Activated CD4-positive, alpha-beta T cell treated with anti-CD3 and anti-CD28 coated beads for 36 hours (primary cell): ENCODE measurements at regions of chr17 and their contacts with region 1.

Region 1: GRCh38 chr17:59762513-59763374 is 55.3 kb downstream of the VMP1 start:
- DNase-seq: no peak
- ATAC-seq: peak; percentile 66
- H3K4me3 Mint-ChIP-seq: peak overlapping the region; percentile 63
- H3K27ac Mint-ChIP-seq: peak overlapping the region; percentile 98
- H3K4me1 Mint-ChIP-seq: peaks cover 68% of the 10 kb centered on the region
- H3K27me3 Mint-ChIP-seq: no peaks in the 10 kb centered on the region

Region 2: DNA sequence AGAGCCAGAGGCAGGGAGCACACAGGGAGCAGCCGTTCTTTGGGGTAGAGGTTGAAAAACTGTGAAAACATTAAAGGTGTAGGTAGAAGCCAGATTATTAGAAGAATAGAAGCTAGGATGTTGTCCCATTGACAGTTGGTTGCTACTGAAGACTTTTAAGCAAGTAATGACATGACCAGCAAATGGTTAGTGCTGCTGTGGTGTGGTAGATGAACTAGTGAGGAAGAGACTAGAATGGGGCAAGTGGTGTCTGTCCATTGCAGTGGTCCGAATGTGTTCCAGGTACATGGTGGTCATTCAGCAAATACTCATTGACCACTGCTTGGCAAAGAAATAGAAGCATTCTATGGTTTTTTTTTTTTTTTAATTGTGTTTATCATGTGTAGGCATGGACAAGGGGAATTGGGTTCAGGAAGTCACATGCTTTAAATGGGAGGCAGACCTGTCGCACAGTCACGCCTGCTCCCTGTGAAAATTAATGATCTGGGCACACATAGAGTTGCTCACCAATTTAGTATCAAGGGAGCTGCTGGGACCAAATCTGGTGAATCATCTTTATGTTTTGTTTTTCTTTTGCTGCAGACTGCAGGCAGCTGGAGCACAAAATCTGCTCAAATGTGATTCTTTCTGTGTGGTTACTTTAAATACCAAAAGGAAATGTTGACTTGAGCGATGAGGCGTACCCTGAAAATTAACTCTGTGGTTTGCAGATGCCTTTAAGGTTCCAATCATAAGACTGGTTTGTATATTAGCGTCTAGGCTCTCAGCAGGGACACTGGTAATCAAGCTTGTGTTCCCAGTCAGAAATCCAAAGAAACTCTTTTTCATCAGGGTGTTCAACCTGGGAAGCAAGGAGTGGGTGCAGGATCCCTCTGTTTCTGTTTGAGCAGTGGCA is 400.6 kb before region 1 on chr17:
- CTCF ChIA-PET with region 1: no interaction called
- POLR2A ChIA-PET with region 1: no interaction called
- intact Hi-C with region 1: loop called in 1 of 2 experiments (anchors 5 kb)
- DNase-seq: peak; percentile 55
- ATAC-seq: peak; percentile 73
- H3K4me3 Mint-ChIP-seq: peak overlapping the region; percentile 60
- H3K27ac Mint-ChIP-seq: peak overlapping the region; percentile 96
- H3K4me1 Mint-ChIP-seq: peaks cover 78% of the 10 kb centered on the region
- H3K27me3 Mint-ChIP-seq: no peaks in the 10 kb centered on the region

Region 3: DNA sequence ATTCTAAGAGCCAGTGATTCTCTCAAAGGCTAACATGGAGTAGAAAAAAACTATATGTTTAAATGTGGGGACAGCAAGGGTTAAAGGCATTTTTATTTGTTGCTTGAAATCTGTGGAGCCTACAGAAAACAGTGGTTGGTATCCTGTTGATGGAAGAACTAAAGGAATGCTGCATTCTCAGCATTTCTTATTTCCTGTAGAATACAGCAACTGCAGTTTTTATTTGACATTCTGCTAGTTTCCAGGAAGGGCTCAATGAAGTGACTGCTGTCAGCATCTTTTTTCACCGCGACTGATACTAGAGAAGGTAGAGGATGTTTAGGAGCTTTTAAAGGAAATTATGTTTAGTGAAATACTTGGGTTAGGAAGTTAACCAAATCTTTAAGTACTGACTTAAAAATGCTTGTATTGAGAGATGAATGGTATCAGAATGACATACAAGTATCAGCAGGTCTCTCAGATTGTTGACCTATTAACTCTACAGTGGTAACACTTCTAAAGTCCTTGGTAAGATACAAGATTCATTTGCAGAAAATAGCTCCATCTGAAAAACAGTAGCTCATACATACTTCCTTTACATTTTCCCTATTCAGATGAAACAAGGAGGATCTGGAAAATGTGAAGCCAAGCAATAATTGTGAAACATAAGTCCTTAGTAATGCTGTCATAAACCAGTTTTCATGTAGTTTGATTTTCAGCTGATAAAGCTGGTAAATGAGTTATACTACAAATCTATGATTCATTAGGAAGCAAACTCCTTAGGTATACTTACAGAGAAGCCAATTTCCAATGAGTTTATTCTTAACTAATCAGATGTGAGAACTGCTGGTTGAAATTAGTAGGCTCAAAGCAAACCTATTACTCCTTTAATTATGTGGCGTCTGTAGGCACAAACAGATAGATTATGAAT is 127.9 kb before region 1 on chr17:
- CTCF ChIA-PET with region 1: no interaction called
- POLR2A ChIA-PET with region 1: no interaction called
- intact Hi-C with region 1: no loop called
- DNase-seq: no peak
- ATAC-seq: peak; percentile 50
- H3K4me3 Mint-ChIP-seq: no peak overlapping the region
- H3K27ac Mint-ChIP-seq: peak overlapping the region; percentile 63
- H3K4me1 Mint-ChIP-seq: peaks cover 72% of the 10 kb centered on the region
- H3K27me3 Mint-ChIP-seq: no peaks in the 10 kb centered on the region

Region 4: DNA sequence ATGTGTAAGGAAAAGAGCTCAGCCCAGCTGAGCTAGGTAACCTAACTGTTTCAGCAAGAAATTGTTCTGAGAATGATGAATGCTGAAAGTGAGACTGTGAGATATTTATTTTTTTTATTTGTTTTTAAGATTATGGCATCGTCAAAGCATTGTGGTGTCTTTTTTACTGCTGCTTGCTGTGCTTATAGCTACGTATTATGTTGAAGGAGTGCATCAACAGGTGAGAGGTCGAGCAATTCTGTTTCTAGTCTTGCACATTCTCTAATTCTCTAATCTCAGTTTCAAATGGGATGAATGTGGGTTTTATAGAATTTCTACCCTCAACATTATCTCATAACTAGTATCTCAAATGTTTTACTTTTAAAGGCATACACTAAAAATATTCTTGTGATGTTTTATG is 25.4 kb before region 1 on chr17:
- CTCF ChIA-PET with region 1: no interaction called
- POLR2A ChIA-PET with region 1: no interaction called
- intact Hi-C with region 1: no loop called
- DNase-seq: no peak
- ATAC-seq: no peak
- H3K4me3 Mint-ChIP-seq: no peak overlapping the region
- H3K27ac Mint-ChIP-seq: no peak overlapping the region
- H3K4me1 Mint-ChIP-seq: no peaks in the 10 kb centered on the region
- H3K27me3 Mint-ChIP-seq: no peaks in the 10 kb centered on the region

Region 5: DNA sequence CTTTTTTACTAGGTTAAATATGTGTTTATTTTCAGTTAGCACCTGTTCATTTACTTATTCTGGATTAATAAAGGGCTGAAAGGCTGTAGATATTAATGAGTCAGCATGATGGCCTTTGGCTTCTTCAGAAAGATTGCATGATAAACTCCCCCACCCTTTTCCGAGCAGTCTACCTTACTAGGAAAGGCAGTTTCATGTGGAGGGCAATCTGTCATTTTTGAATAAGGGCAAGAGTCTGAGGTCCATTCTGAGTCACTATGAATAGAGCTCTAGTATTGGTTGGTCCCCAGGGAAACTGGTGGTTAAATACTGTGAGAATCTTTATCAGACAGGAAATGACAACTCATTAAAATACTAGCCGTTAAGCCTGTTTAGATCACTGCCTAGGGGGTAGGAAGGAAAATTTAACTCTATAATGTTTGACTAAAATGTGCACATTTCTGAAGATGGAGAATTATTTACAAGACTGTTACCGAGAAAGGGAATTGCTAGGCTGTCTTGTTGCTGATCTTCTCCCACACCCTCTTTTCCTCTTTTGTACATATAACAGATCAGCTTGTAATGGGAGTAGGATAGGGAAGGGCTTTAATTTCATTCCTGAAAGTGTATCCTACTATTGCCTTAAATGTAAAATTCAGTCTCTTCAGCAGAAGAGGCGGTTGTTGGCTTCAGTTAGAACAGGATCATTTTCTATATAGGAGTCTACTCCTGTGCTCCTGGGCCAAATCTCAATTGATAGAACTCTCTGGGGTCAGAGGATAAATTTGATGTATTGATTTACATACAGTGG is 66.7 kb after region 1 on chr17:
- CTCF ChIA-PET with region 1: interaction called, 12 read pairs
- POLR2A ChIA-PET with region 1: interaction called, 23 read pairs
- intact Hi-C with region 1: loop called (anchors 1 to 2 kb)
- DNase-seq: peak; percentile 65
- ATAC-seq: peak; percentile 72
- H3K4me3 Mint-ChIP-seq: peak overlapping the region; percentile 78
- H3K27ac Mint-ChIP-seq: peak overlapping the region; percentile 93
- H3K4me1 Mint-ChIP-seq: peaks cover 87% of the 10 kb centered on the region
- H3K27me3 Mint-ChIP-seq: no peaks in the 10 kb centered on the region

Region 6: GRCh38 chr17:59846394-59847165 is 83.8 kb after region 1 on chr17:
- CTCF ChIA-PET with region 1: interaction called, 3 read pairs
- POLR2A ChIA-PET with region 1: interaction called, 83 read pairs
- intact Hi-C with region 1: loop called in 1 of 2 experiments (anchors 1 kb)
- DNase-seq: no peak
- ATAC-seq: peak; percentile 21
- H3K4me3 Mint-ChIP-seq: peak overlapping the region; percentile 46
- H3K27ac Mint-ChIP-seq: peak overlapping the region; percentile 87
- H3K4me1 Mint-ChIP-seq: peaks cover 73% of the 10 kb centered on the region
- H3K27me3 Mint-ChIP-seq: no peaks in the 10 kb centered on the region

Region 7: DNA sequence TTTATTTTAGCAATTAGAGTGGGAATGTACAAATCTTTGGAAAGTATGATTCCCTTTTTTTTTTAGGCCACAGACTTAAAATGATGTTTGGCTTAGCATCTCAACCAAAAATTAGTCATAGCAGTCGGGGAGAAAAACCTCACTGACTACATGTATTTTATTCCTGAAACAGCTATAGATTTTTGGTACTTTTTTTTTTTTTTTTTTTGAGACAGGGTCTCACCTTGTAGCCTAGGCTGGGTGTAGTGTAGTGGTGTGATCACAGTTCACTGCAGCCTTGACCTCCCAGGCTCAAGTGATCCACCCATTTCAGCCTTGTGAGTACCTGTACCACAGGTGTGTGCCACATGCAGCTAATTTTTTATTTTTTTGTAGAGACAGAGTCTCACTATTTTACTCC is 178.4 kb after region 1 on chr17:
- CTCF ChIA-PET with region 1: no interaction called
- POLR2A ChIA-PET with region 1: no interaction called
- intact Hi-C with region 1: loop called in 1 of 2 experiments (anchors 5 kb)
- DNase-seq: peak; percentile 31
- ATAC-seq: peak; percentile 51
- H3K4me3 Mint-ChIP-seq: peak overlapping the region; percentile 27
- H3K27ac Mint-ChIP-seq: peak overlapping the region; percentile 94
- H3K4me1 Mint-ChIP-seq: peaks cover 53% of the 10 kb centered on the region
- H3K27me3 Mint-ChIP-seq: no peaks in the 10 kb centered on the region

Region 8: GRCh38 chr17:60077672-60078519 is 315.2 kb after region 1 on chr17:
- CTCF ChIA-PET with region 1: no interaction called
- POLR2A ChIA-PET with region 1: no interaction called
- intact Hi-C with region 1: no loop called
- DNase-seq: peak; percentile 81
- ATAC-seq: peak; percentile 73
- H3K4me3 Mint-ChIP-seq: peak overlapping the region; percentile 84
- H3K27ac Mint-ChIP-seq: peak overlapping the region; percentile 95
- H3K4me1 Mint-ChIP-seq: peaks cover 19% of the 10 kb centered on the region
- H3K27me3 Mint-ChIP-seq: no peaks in the 10 kb centered on the region